Ovary (tissue), 10 donors: ENCODE measurements at regions of chr6 and their contacts with region 1.

Region 1: GRCh38 chr6:33417903-33418689 is at the start of gene CUTA:
- DNase-seq: peak; percentile 99
- H3K4me3 ChIP-seq: peak within 1 kb of the TSS; percentile 71
- H3K27ac ChIP-seq: peak within 1 kb of the TSS; percentile 91 to 92
- H3K4me1 ChIP-seq: peaks cover 5% of the 10 kb centered on the region
- H3K27me3 ChIP-seq: no peaks in the 10 kb centered on the region
- CTCF ChIP-seq: peak in 2 of 3 donors; percentile 39 to 57
- EP300 ChIP-seq: peak; percentile 56
- POLR2A ChIP-seq: peak; percentile 97
- total RNA-seq, gene CUTA: 125 to 238 (median 177) TPM

Region 2: GRCh38 chr6:32668226-32668747 is 749.8 kb before region 1 on chr6:
- intact Hi-C with region 1: no loop called
- DNase-seq: no peak
- H3K4me3 ChIP-seq: no peak overlapping the region
- H3K27ac ChIP-seq: no peak overlapping the region
- H3K4me1 ChIP-seq: peaks cover 3% of the 10 kb centered on the region
- H3K27me3 ChIP-seq: no peaks in the 10 kb centered on the region
- CTCF ChIP-seq: no peak
- EP300 ChIP-seq: no peak
- POLR2A ChIP-seq: no peak

Region 3: GRCh38 chr6:33271458-33272274 is 146.4 kb before region 1 on chr6 and contains the starts of genes RPS18 and VPS52:
- intact Hi-C with region 1: loop called in 1 of 4 experiments (anchors 10 kb)
- DNase-seq: peak; percentile 91 to 95 (median 93)
- H3K4me3 ChIP-seq: peak within 1 kb of the TSS; percentile 55
- H3K27ac ChIP-seq: peak within 1 kb of the TSS; percentile 59 to 89
- H3K4me1 ChIP-seq: peaks cover 5% of the 10 kb centered on the region
- H3K27me3 ChIP-seq: no peaks in the 10 kb centered on the region
- CTCF ChIP-seq: peak in 2 of 3 donors; percentile 10 to 17
- EP300 ChIP-seq: peak; percentile 38
- POLR2A ChIP-seq: peak; percentile 96
- total RNA-seq, gene RPS18: 4,177 to 8,845 (median 4,854) TPM
- total RNA-seq, gene VPS52: 24.0 to 55.6 (median 45.2) TPM

Region 4: DNA sequence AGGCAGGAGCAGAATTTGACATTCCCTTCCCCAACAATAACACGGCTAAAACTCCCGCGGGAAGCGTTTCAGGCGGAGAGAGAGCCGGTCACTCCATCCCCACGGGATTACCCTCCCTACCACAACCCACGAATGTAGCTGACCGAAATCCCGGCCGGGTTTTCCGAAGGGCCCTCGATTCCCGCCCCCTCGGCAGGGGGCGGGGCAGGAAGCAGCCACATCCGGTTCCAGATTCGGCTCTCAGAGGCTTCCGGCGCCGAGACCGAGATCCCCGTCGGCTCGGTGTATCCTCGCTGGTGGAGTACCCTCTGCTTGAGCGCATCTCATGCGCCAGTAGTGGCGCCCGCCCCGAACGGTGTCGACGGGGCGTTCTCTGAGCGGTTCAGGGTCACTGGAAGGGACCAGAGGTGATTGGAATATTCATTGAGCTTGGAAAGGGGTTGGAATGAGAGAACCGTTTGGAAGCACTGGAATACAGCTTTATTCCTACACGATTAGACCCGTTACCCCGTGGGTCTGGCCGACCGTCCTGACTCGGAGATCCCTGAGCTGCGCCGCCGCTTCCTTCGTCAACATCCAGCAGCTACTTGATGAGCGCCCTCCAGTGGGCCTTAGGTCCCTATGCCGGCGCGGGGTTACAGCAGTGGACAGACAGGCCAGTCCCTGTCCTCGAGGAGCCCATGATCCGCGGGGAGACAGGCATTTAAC is 118.7 kb before region 1 on chr6:
- intact Hi-C with region 1: loop called in 2 of 4 experiments (anchors 5 to 10 kb)
- DNase-seq: peak; percentile 90 to 93 (median 92)
- H3K4me3 ChIP-seq: peak overlapping the region; percentile 69
- H3K27ac ChIP-seq: peak overlapping the region; percentile 73 to 96
- H3K4me1 ChIP-seq: peaks cover 9% of the 10 kb centered on the region
- H3K27me3 ChIP-seq: no peaks in the 10 kb centered on the region
- CTCF ChIP-seq: peak in 2 of 3 donors; percentile 52 to 66
- EP300 ChIP-seq: peak; percentile 9
- POLR2A ChIP-seq: peak; percentile 77

Region 5: DNA sequence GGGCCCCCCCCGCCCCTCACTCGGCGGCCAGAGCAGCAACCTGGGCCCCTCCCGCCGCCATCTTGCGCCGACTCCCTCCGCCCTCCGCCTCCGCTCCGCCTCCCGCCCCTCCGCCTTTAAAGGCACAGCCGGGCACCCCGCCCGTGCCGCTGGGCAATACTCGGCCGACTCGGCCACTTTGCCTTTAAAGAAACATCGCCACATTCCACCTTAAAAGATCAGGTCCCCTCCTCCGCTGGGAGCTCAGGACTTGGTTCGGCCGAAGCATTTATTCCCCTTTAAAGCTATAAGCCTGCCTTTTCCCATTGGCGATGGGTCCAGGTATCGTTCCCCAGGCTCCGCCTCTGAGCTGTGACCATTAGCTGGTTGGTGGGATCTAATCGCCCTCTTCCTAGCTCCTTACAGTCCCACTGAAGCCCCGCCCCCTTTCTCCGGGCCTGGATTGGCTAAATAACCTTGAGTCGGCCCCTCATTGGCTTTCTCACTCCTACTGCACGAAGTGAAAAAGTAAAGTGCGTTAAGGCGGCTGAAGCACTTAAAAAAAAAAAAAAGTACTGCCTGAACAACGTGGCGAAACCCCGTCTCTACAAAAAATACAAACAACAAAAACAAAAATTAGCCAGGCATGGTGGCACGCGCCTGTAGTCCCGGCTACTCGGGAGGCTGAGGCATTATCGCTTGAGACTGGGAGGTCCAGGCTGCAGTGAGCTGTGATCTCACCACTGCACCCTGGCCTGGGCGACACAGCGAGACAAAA is 100.2 kb before region 1 on chr6 and contains the start of gene ZBTB22:
- intact Hi-C with region 1: loop called in 2 of 4 experiments (anchors 10 kb)
- DNase-seq: peak; percentile 97 to 100 (median 99)
- H3K4me3 ChIP-seq: peak within 1 kb of the TSS; percentile 49
- H3K27ac ChIP-seq: peak within 1 kb of the TSS; percentile 81 to 83
- H3K4me1 ChIP-seq: peaks cover 14% of the 10 kb centered on the region
- H3K27me3 ChIP-seq: no peaks in the 10 kb centered on the region
- CTCF ChIP-seq: no peak
- EP300 ChIP-seq: no peak
- POLR2A ChIP-seq: no peak
- total RNA-seq, gene ZBTB22: 17.9 to 38.0 (median 26.1) TPM

Region 6: GRCh38 chr6:33508935-33509926 is 91.1 kb after region 1 on chr6:
- intact Hi-C with region 1: no loop called
- DNase-seq: no peak
- H3K4me3 ChIP-seq: no peak overlapping the region
- H3K27ac ChIP-seq: no peak overlapping the region
- H3K4me1 ChIP-seq: peaks cover 2% of the 10 kb centered on the region
- H3K27me3 ChIP-seq: no peaks in the 10 kb centered on the region
- CTCF ChIP-seq: no peak
- EP300 ChIP-seq: no peak
- POLR2A ChIP-seq: no peak